Activated naive CD8-positive, alpha-beta T cell treated with anti-CD3 and anti-CD28 coated beads, Interleukin-2, amount 10 ng/mL, durations not matched to agents 7 days and 5 days (primary cell): ENCODE measurements at regions of chr12 and their contacts with region 1.

Region 1: DNA sequence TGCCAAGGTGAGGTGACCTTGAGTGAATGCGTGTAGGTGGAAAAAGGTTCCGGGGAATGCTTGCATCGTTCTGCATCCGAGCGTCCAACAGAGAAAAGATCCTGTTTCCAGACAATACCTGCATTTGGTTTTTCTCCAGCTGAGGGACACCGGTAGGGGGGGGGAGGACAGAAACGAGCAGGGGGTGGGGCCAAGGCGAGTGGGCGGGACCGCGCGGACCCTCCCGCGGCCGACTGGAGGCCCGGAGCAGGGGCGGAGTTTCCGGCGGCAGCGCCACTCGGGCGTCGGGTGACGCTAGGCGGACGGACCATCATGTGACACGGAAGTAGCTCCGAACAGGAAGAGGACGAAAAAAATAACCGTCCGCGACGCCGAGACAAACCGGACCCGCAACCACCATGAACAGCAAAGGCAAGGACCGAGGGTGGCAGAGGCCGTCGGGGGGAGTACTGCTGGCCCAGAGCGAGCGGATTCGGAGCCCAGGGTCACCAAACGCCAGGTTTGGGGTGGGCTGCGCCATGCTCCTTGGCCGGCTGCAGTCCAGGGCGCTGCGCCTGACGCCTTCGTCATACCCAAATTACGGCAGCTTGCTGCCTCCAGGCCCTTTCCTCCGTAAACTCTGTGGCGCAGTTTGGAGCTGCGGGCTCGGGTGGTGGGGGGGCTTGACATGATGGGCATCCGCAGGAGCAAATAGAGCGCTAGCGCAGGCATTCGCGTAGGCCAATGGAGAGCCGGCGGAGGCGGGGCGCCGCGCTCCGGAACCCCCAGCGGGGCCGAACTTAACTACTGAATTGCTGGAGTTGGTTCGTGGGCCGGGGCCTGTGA is at the start of gene DAZAP2:
- DNase-seq: peak; percentile 93
- ATAC-seq: peak; percentile 95
- H3K4me3 Mint-ChIP-seq: peak within 1 kb of the TSS; percentile 98
- H3K27ac Mint-ChIP-seq: peak within 1 kb of the TSS; percentile 100
- H3K4me1 Mint-ChIP-seq: peaks cover 36% of the 10 kb centered on the region
- H3K27me3 Mint-ChIP-seq: no peaks in the 10 kb centered on the region
- total RNA-seq, gene DAZAP2: 237 to 249 TPM

Region 2: DNA sequence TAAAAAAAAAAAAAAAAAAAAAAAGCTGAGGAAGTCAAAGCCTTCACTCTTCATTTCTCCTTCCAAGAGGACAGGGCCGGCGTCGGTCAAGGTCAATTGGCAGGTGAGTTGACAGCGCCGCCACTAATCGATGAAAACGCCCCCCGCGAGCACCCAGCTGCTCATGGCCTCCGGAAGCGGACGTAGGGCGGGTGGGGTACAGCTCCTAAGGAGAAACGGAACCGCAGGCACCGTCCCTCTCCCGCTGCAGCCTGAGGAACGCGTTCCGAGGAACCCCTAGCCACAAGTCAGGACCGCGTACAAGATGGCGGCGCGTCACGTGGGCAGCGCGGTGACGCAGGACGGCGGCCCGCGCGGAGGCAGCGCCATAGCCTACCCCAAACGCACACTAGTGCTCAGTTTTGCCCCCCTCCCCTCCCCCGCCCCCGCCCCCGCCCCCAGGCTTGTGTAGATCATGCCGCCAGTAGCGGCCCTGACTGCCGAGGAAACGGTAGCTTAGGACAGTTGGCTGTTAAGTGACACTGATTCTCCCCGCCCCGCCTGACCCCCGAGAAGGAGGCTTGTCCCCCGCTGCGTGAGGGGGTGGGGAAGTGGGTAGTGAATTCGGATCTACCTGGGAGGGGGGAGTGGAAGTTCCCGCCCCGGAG is 475.0 kb before region 1 on chr12 and contains the start of gene ATF1:
- POLR2A ChIA-PET with region 1: interaction called, 19 read pairs
- DNase-seq: peak; percentile 94
- ATAC-seq: peak; percentile 82
- H3K4me3 Mint-ChIP-seq: peak within 1 kb of the TSS; percentile 91
- H3K27ac Mint-ChIP-seq: peak within 1 kb of the TSS; percentile 94
- H3K4me1 Mint-ChIP-seq: peaks cover 19% of the 10 kb centered on the region
- H3K27me3 Mint-ChIP-seq: no peaks in the 10 kb centered on the region
- total RNA-seq, gene ATF1: 36.4 to 39.1 TPM

Region 3: GRCh38 chr12:51083126-51083833 is 155.4 kb before region 1 on chr12 and contains the start of gene CSRNP2:
- POLR2A ChIA-PET with region 1: interaction called, 12 read pairs
- DNase-seq: peak; percentile 96
- ATAC-seq: peak; percentile 99
- H3K4me3 Mint-ChIP-seq: peak within 1 kb of the TSS; percentile 97
- H3K27ac Mint-ChIP-seq: peak within 1 kb of the TSS; percentile 90
- H3K4me1 Mint-ChIP-seq: peaks cover 24% of the 10 kb centered on the region
- H3K27me3 Mint-ChIP-seq: no peaks in the 10 kb centered on the region
- total RNA-seq, gene CSRNP2: 20.0 to 24.4 TPM

Region 4: DNA sequence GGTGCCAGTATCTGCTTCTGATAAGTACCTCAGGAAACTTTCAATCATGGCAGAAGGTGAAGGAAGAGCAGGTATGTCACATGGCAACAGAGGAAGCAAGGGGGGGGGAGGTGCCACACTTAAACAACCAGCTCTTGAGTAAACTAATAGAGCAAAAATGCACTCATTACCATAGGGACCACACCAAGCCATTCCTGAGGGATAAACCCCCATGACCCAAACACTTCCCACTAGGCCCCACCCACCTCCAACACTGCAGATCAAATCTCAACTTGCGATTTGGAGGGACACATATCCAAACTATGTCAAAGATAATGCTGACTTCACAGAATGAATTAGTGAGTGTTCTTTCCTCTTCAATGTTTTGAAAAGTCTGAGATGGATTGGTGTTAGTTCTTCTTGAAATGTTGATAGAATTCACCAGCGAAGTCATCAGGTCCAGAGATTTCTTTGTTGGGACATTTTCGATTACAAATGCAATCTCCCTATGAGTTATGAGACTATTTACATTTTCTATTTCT is 82.4 kb before region 1 on chr12:
- POLR2A ChIA-PET with region 1: no interaction called
- DNase-seq: no peak
- ATAC-seq: no peak
- H3K4me3 Mint-ChIP-seq: no peak overlapping the region
- H3K27ac Mint-ChIP-seq: no peak overlapping the region
- H3K4me1 Mint-ChIP-seq: peaks cover 17% of the 10 kb centered on the region
- H3K27me3 Mint-ChIP-seq: no peaks in the 10 kb centered on the region

Region 5: DNA sequence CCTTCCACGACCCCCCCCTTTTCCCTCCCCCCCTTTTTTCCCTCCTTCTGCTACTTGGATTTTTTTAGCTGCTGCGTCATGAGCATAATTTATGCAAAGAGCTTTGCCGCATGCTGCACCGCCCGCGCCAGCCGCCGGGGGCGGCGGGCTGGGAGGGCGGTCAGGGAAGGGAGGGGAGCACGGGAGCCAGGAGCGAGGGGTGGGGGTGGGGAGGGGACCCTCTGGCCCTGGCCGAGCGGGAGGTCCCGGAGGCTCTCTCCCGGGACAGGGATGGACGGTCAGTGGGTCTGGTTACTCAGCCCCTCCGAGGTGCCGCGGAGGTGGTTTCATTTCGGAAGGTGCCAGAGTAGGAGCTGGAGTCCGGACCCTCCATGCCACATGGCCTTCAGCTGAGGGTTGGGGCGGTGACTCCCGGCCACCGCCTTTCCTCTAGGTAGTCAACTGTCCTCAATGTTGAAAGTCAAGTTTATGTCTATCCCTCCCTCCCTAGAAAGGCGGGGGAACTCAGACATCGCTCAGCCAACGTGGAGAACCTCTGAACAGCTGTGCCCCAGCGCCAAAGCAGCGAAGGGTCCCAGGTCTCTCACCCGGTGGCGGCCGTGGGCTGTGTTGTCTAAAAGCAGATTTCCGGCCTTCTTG is 20.6 kb before region 1 on chr12 and contains the start of gene POU6F1:
- POLR2A ChIA-PET with region 1: interaction called, 46 read pairs
- DNase-seq: peak; percentile 78
- ATAC-seq: peak; percentile 80
- H3K4me3 Mint-ChIP-seq: peak within 1 kb of the TSS; percentile 71
- H3K27ac Mint-ChIP-seq: peak within 1 kb of the TSS; percentile 67
- H3K4me1 Mint-ChIP-seq: peaks cover 8% of the 10 kb centered on the region
- H3K27me3 Mint-ChIP-seq: no peaks in the 10 kb centered on the region
- total RNA-seq, gene POU6F1: 20.6 to 21.8 TPM

Region 6: DNA sequence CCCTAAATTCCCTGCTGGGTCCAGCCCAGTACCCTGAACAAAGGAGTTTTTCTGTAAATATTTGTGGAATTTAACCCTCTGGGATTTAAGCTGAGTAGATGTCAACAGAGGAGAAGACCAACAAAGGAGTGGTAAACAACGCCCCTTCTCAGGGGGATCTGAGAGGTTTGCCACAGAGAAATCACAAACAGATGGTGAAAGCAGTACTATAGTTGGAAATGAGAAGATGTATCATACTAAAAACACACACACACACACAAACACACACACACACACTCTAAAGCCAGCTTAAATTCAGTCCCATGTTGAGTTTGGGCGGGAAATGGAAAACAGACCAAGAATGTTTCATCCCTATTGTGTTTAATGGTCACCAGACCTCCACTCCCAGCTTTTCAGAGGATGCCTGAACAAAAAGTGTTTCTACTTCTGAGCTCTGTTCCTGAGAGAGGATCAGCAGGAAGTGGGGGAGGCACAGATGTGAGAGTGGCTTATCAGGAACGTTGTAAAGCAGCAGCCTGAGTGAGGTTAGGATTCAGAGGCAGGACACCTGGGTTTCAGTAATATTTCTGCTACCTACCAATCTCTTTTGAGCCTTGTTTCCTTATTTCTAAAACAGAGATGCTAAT is 82.1 kb after region 1 on chr12:
- POLR2A ChIA-PET with region 1: interaction called, 13 read pairs
- DNase-seq: no peak
- ATAC-seq: no peak
- H3K4me3 Mint-ChIP-seq: peak overlapping the region; percentile 96
- H3K27ac Mint-ChIP-seq: peak overlapping the region; percentile 87
- H3K4me1 Mint-ChIP-seq: peaks cover 54% of the 10 kb centered on the region
- H3K27me3 Mint-ChIP-seq: no peaks in the 10 kb centered on the region

Region 7: GRCh38 chr12:51326762-51327439 is 88.2 kb after region 1 on chr12:
- POLR2A ChIA-PET with region 1: interaction called, 13 read pairs
- DNase-seq: no peak
- ATAC-seq: no peak
- H3K4me3 Mint-ChIP-seq: peak overlapping the region; percentile 61
- H3K27ac Mint-ChIP-seq: peak overlapping the region; percentile 89
- H3K4me1 Mint-ChIP-seq: peaks cover 43% of the 10 kb centered on the region
- H3K27me3 Mint-ChIP-seq: no peaks in the 10 kb centered on the region

Region 8: DNA sequence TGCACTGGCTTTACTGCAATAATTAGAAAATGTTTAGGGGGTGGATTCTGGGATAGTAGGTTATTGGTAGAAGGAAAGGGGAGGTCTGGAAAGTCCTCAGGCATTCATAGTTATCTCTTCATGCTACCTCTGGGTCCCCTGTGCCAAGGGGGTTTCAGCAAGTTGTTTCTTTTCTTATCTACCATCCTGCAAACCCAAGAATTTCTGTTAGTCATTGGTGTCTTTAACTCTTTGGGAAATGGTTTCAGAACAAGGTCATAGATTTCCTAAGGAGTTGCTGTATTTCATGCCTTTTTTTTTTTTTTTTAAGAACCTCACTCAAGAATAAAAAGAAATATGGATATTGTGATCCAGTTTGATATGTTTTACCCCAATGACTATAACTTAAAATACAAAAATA is 249.6 kb after region 1 on chr12:
- POLR2A ChIA-PET with region 1: no interaction called
- DNase-seq: no peak
- ATAC-seq: no peak
- H3K4me3 Mint-ChIP-seq: no peak overlapping the region
- H3K27ac Mint-ChIP-seq: no peak overlapping the region
- H3K4me1 Mint-ChIP-seq: peaks cover 12% of the 10 kb centered on the region
- H3K27me3 Mint-ChIP-seq: no peaks in the 10 kb centered on the region